ENCODE measurements at regions of chr15 and their contacts with region 1.

Region 1: GRCh38 chr15:40825661-40826088 is 2.8 kb downstream of the PPP1R14D start:
- DNase-seq: peak; percentile 49
- H3K4me3 ChIP-seq: no peak overlapping the region
- H3K27ac ChIP-seq: no peak overlapping the region
- H3K4me1 ChIP-seq: peaks cover 5% of the 10 kb centered on the region
- H3K27me3 ChIP-seq: no peaks in the 10 kb centered on the region
- CTCF ChIP-seq: no peak

Region 2: DNA sequence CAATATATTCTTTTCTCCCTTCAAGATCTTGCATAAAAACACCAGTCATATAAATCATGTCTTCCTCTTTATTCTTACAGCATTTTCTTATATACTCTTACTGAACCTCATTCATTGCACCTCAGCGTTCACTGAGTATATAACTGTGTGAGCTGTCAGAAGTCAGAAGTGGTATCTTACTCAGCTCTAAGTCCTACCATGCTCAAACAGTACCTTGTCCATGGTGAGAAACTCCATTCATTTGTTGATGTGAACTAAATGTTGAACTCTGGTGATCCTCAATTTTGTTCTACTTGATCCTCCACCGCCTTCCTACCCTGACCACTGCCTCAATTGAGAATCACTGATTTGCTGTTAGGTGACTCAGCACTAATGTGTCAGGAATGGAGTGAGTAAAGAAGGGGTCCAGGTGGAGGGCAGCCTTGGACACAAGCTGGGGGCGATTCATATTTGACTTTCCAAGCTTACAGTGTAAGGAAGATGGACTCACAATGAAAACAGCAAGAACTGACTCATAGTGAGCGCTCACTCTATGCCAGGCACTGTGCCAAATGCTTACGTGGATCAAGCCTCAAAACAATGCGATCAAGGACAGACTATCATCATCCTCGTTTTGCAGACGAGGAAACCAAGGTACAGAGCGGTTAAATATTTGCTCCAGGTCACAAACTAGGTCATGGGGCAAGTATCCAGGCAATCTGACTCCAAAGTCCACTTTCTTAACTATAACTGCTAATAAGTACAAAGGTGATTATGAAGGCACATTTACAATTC is 32.3 kb before region 1 on chr15:
- CTCF ChIA-PET with region 1: no interaction called
- dilution Hi-C with region 1: loop called (anchors 5 kb)
- in situ Hi-C with region 1: no loop called
- intact Hi-C with region 1: no loop called
- DNase-seq: peak; percentile 96
- H3K4me3 ChIP-seq: no peak overlapping the region
- H3K27ac ChIP-seq: peak overlapping the region; percentile 44
- H3K4me1 ChIP-seq: peaks cover 17% of the 10 kb centered on the region
- H3K27me3 ChIP-seq: no peaks in the 10 kb centered on the region
- CTCF ChIP-seq: no peak

Region 3: GRCh38 chr15:40835948-40836347 is 10.3 kb after region 1 on chr15:
- CTCF ChIA-PET with region 1: no interaction called
- dilution Hi-C with region 1: no loop called
- in situ Hi-C with region 1: no loop called
- intact Hi-C with region 1: loop called (anchors 1 kb)
- DNase-seq: no peak
- H3K4me3 ChIP-seq: no peak overlapping the region
- H3K27ac ChIP-seq: no peak overlapping the region
- H3K4me1 ChIP-seq: peaks cover 21% of the 10 kb centered on the region
- H3K27me3 ChIP-seq: no peaks in the 10 kb centered on the region
- CTCF ChIP-seq: no peak